ENCODE measurements at regions of chr11 and their contacts with region 1.

Region 1: GRCh38 chr11:72722050-72722748 is 30.0 kb downstream of the ARAP1 start:
- DNase-seq: peak; percentile 82 to 89
- H3K4me3 ChIP-seq: peak overlapping the region; percentile 59 to 90 (median 68)
- H3K27ac ChIP-seq: peak overlapping the region; percentile 85 to 91
- H3K4me1 ChIP-seq: peaks cover 4 to 17% of the 10 kb centered on the region in 2 donors
- H3K27me3 ChIP-seq: no peaks in the 10 kb centered on the region
- CTCF ChIP-seq: peak in 2 of 3 donors; percentile 13 to 18
- POLR2A ChIP-seq: peak; percentile 43

Region 2: DNA sequence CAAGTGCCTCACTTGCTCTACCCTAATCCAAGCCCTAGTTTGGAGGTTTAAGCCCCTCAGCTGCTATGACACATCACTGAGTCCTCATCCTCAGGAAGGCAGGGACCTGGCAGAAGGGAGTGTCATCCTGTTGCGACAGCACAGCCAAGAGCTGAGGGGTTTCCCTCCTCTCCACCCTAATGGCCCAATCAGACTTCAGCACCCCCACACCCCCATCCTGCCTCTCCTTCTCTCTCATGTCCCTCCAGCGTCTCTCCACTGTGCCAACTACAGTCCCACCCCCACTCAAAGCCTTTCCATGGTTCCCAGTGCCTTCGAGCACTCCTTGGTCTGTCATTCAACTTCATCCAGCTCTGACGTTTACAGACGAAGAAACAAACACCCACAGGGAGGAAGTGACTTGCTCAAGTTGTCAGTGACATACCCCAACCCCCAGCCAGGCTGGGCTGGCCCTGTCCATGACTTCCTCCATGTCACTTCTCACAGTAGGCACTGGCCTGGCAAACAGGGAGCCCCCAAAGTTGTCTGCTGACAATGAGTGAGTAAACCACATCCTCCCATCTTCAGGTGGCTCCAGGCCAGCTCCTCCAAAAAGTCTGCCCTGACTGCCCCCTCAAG is 14.4 kb after region 1 on chr11:
- intact Hi-C with region 1: no loop called
- DNase-seq: peak in 1 of 2 donors; percentile 41
- H3K4me3 ChIP-seq: no peak overlapping the region
- H3K27ac ChIP-seq: peak overlapping the region in 1 of 2 donors; percentile 64
- H3K4me1 ChIP-seq: no peaks in the 10 kb centered on the region
- H3K27me3 ChIP-seq: no peaks in the 10 kb centered on the region
- CTCF ChIP-seq: no peak
- POLR2A ChIP-seq: no peak

Region 3: DNA sequence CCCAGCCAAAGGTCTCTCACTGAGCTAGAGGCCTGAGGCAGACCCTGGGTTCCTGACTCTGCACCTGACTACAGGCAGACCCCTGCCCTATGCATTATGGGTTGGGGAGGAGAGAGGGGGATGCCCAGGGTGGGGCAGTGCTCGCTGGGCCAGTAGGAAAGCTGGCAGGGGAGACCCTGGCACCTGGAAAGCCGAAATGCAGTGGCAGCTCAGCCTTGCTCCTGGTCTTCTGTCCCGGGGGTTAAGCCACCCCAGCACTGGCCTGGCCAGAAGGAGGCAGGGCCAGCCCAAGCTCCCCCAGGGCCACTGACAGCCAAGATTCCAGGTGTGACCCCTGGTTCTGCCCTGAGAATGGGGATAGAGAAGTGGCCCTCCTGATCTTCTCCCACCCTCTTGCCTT is 24.6 kb after region 1 on chr11:
- intact Hi-C with region 1: no loop called
- DNase-seq: no peak
- H3K4me3 ChIP-seq: no peak overlapping the region
- H3K27ac ChIP-seq: no peak overlapping the region
- H3K4me1 ChIP-seq: no peaks in the 10 kb centered on the region
- H3K27me3 ChIP-seq: no peaks in the 10 kb centered on the region
- CTCF ChIP-seq: no peak
- POLR2A ChIP-seq: no peak

Region 4: GRCh38 chr11:72781313-72782050 is 59.3 kb after region 1 on chr11:
- intact Hi-C with region 1: loop called (anchors 10 kb)
- DNase-seq: no peak
- H3K4me3 ChIP-seq: peak overlapping the region; percentile 57 to 92 (median 81)
- H3K27ac ChIP-seq: peak overlapping the region; percentile 83 to 93
- H3K4me1 ChIP-seq: peaks cover 3 to 22% of the 10 kb centered on the region in 2 donors
- H3K27me3 ChIP-seq: no peaks in the 10 kb centered on the region
- CTCF ChIP-seq: no peak
- POLR2A ChIP-seq: no peak

Region 5: GRCh38 chr11:72814286-72815109 is 92.3 kb after region 1 on chr11 and contains the start of gene ATG16L2:
- intact Hi-C with region 1: loop called (anchors 10 kb)
- DNase-seq: peak; percentile 76 to 80
- H3K4me3 ChIP-seq: peak within 1 kb of the TSS; percentile 75 to 95 (median 89)
- H3K27ac ChIP-seq: peak within 1 kb of the TSS; percentile 94 to 97
- H3K4me1 ChIP-seq: no peaks in the 10 kb centered on the region
- H3K27me3 ChIP-seq: no peaks in the 10 kb centered on the region
- CTCF ChIP-seq: peak in 1 of 3 donors; percentile 33
- POLR2A ChIP-seq: no peak
- total RNA-seq, gene ATG16L2: 18.7 to 39.2 (median 28.2) TPM

Region 6: GRCh38 chr11:73177778-73178577 is 455.8 kb after region 1 on chr11:
- intact Hi-C with region 1: loop called (anchors 10 kb)
- DNase-seq: peak; percentile 80
- H3K4me3 ChIP-seq: peak overlapping the region in 1 of 3 donors; percentile 21
- H3K27ac ChIP-seq: peak overlapping the region; percentile 68 to 77
- H3K4me1 ChIP-seq: no peaks in the 10 kb centered on the region
- H3K27me3 ChIP-seq: no peaks in the 10 kb centered on the region
- CTCF ChIP-seq: peak; percentile 55 to 92 (median 79)
- POLR2A ChIP-seq: no peak